Calu3 (cell line): ENCODE measurements at regions of chr2 and their contacts with region 1.

Region 1: DNA sequence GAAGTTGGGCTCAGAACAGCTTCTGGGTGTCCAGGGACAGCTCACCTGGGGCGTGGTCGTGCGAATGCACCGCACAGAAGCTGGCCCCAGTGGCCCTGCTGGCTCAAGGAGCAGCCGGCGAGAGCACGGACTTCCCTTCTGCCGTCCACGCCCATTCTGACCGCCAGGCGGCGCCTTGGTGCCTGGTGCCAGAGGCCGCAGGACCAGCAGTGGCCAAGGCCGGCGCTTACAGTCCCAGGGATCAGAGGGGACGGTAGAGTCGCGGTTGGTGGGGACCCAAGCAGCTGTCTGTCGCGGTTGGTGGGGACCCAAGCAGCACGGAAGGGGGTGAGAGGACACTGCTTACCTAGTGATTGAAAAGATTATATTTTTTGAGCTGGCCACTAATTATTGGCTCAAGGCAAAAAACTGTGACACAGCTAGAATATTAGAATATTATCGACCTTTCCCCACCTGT is 25.7 kb downstream of the NPPC start:
- DNase-seq: peak; percentile 95
- H3K4me3 Mint-ChIP-seq: peak overlapping the region; percentile 45
- H3K27ac Mint-ChIP-seq: no peak overlapping the region
- H3K4me1 Mint-ChIP-seq: peaks cover 15% of the 10 kb centered on the region
- H3K27me3 Mint-ChIP-seq: peaks cover 27% of the 10 kb centered on the region
- CTCF ChIP-seq: peak; percentile 88

Region 2: GRCh38 chr2:231854671-231855070 is 45.8 kb before region 1 on chr2:
- CTCF ChIA-PET with region 1: no interaction called
- intact Hi-C with region 1: loop called (anchors 2 kb)
- DNase-seq: no peak
- H3K4me3 Mint-ChIP-seq: no peak overlapping the region
- H3K27ac Mint-ChIP-seq: no peak overlapping the region
- H3K4me1 Mint-ChIP-seq: no peaks in the 10 kb centered on the region
- H3K27me3 Mint-ChIP-seq: peaks cover 54% of the 10 kb centered on the region
- CTCF ChIP-seq: no peak

Region 3: DNA sequence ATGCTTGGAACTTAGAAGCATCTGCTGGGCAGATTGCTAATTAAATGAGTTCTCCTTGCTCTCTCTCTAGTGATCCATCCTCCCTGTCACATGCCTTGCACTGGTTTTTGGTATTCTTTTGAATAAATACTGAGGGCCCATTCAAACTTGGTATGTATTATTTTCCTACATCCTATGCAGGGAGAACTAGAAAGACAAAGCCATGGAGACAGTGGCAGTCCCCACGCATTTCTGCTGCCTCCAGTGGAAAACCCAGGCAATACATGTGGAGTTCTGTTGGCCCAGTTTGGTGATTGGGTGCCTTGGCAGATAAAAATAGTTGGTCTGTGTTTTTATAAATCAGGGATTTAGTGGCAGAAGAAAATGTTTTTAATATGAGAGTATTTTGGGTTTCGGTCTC is 129.7 kb after region 1 on chr2:
- CTCF ChIA-PET with region 1: no interaction called
- intact Hi-C with region 1: no loop called
- DNase-seq: no peak
- H3K4me3 Mint-ChIP-seq: no peak overlapping the region
- H3K27ac Mint-ChIP-seq: no peak overlapping the region
- H3K4me1 Mint-ChIP-seq: no peaks in the 10 kb centered on the region
- H3K27me3 Mint-ChIP-seq: no peaks in the 10 kb centered on the region
- CTCF ChIP-seq: peak; percentile 18

Region 4: GRCh38 chr2:232142049-232142448 is 241.5 kb after region 1 on chr2:
- CTCF ChIA-PET with region 1: no interaction called
- intact Hi-C with region 1: loop called (anchors 5 kb)
- DNase-seq: peak; percentile 19
- H3K4me3 Mint-ChIP-seq: no peak overlapping the region
- H3K27ac Mint-ChIP-seq: no peak overlapping the region
- H3K4me1 Mint-ChIP-seq: no peaks in the 10 kb centered on the region
- H3K27me3 Mint-ChIP-seq: no peaks in the 10 kb centered on the region
- CTCF ChIP-seq: peak; percentile 55

Region 5: GRCh38 chr2:232170396-232170795 is 269.9 kb after region 1 on chr2:
- CTCF ChIA-PET with region 1: interaction called, 10 read pairs
- intact Hi-C with region 1: no loop called
- DNase-seq: no peak
- H3K4me3 Mint-ChIP-seq: no peak overlapping the region
- H3K27ac Mint-ChIP-seq: no peak overlapping the region
- H3K4me1 Mint-ChIP-seq: no peaks in the 10 kb centered on the region
- H3K27me3 Mint-ChIP-seq: no peaks in the 10 kb centered on the region
- CTCF ChIP-seq: no peak

Region 6: GRCh38 chr2:232521959-232522622 is 621.6 kb after region 1 on chr2:
- CTCF ChIA-PET with region 1: no interaction called
- intact Hi-C with region 1: loop called (anchors 5 kb)
- DNase-seq: peak; percentile 80
- H3K4me3 Mint-ChIP-seq: no peak overlapping the region
- H3K27ac Mint-ChIP-seq: no peak overlapping the region
- H3K4me1 Mint-ChIP-seq: no peaks in the 10 kb centered on the region
- H3K27me3 Mint-ChIP-seq: peaks cover 91% of the 10 kb centered on the region
- CTCF ChIP-seq: peak; percentile 88